Caco-2 (cell line): ENCODE measurements at regions of chr2 and their contacts with region 1.

Region 1: GRCh38 chr2:33441235-33441810 is 35.1 kb upstream of the RASGRP3 start:
- DNase-seq: peak; percentile 55 to 64
- H3K4me3 ChIP-seq: no peak overlapping the region
- H3K4me3 Mint-ChIP-seq: no peak overlapping the region
- H3K27ac Mint-ChIP-seq: no peak overlapping the region
- H3K4me1 ChIP-seq: no peaks in the 10 kb centered on the region
- H3K4me1 Mint-ChIP-seq: no peaks in the 10 kb centered on the region
- H3K27me3 ChIP-seq: no peaks in the 10 kb centered on the region
- H3K27me3 Mint-ChIP-seq: peaks cover under 1% of the 10 kb centered on the region
- CTCF ChIP-seq: peak; percentile 55 to 74

Region 2: GRCh38 chr2:33583194-33583938 is 142.0 kb after region 1 on chr2:
- CTCF ChIA-PET with region 1: interaction called, 10 read pairs
- POLR2A ChIA-PET with region 1: no interaction called
- intact Hi-C with region 1: loop called (anchors 1 kb)
- DNase-seq: peak in 1 of 2 experiments; percentile 44
- H3K4me3 ChIP-seq: no peak overlapping the region
- H3K4me3 Mint-ChIP-seq: no peak overlapping the region
- H3K27ac Mint-ChIP-seq: no peak overlapping the region
- H3K4me1 ChIP-seq: no peaks in the 10 kb centered on the region
- H3K4me1 Mint-ChIP-seq: no peaks in the 10 kb centered on the region
- H3K27me3 ChIP-seq: no peaks in the 10 kb centered on the region
- H3K27me3 Mint-ChIP-seq: no peaks in the 10 kb centered on the region
- CTCF ChIP-seq: peak; percentile 83 to 85